PC-3 (cell line): ENCODE measurements at regions of chrX and their contacts with region 1.

Region 1: GRCh38 chrX:77899081-77899828 is at the start of gene COX7B:
- DNase-seq: peak; percentile 99
- ATAC-seq: peak; percentile 62
- H3K4me3 ChIP-seq: peak within 1 kb of the TSS; percentile 99
- H3K27ac ChIP-seq: peak within 1 kb of the TSS; percentile 92
- H3K4me1 ChIP-seq: peaks cover 8% of the 10 kb centered on the region; the same call in 1 of the 2 replicates
- H3K27me3 ChIP-seq: no peaks in the 10 kb centered on the region
- CTCF ChIP-seq: peak; percentile 60
- total RNA-seq, gene COX7B: 566 and 852 TPM in 2 replicates

Region 2: GRCh38 chrX:76427560-76428242 is 1471.6 kb before region 1 on chrX and contains the start of gene MAGEE1:
- CTCF ChIA-PET with region 1: no interaction called
- POLR2A ChIA-PET with region 1: interaction called, 16 read pairs
- intact Hi-C with region 1: no loop called
- DNase-seq: peak; percentile 75
- ATAC-seq: peak; percentile 90
- H3K4me3 ChIP-seq: peak within 1 kb of the TSS; percentile 86
- H3K27ac ChIP-seq: no peak within 1 kb of the TSS
- H3K4me1 ChIP-seq: no peaks in the 10 kb centered on the region
- H3K27me3 ChIP-seq: no peaks in the 10 kb centered on the region
- CTCF ChIP-seq: no peak
- total RNA-seq, gene MAGEE1: 1.7 and 2.8 TPM in 2 replicates

Region 3: DNA sequence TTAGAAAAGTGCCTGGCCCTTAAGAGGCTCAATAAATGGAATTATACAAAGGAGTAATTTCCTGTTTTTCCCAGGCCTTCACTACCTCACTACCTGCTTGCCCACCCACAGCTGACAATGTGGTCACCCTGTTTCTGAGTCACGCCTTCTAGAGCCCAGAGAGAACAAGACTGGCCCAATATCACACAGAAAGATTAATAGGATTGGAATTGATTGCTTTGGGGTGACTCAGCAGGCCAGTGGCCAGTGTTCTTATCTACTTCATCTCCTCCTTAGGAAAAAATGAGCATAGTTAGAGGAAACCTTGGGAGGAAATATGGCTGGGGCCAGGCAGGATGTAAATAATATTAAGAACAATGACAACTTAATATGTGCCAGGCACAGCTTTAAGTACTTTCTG is 456.5 kb before region 1 on chrX:
- CTCF ChIA-PET with region 1: no interaction called
- POLR2A ChIA-PET with region 1: no interaction called
- intact Hi-C with region 1: loop called (anchors 5 kb)
- DNase-seq: peak; percentile 92
- ATAC-seq: peak; percentile 95
- H3K4me3 ChIP-seq: no peak overlapping the region
- H3K27ac ChIP-seq: peak overlapping the region; percentile 91
- H3K4me1 ChIP-seq: peaks cover 32% of the 10 kb centered on the region
- H3K27me3 ChIP-seq: no peaks in the 10 kb centered on the region
- CTCF ChIP-seq: no peak

Region 4: GRCh38 chrX:77658886-77659285 is 240.4 kb before region 1 on chrX:
- CTCF ChIA-PET with region 1: no interaction called
- POLR2A ChIA-PET with region 1: interaction called, 4 read pairs
- intact Hi-C with region 1: loop called (anchors 10 kb)
- DNase-seq: no peak
- ATAC-seq: peak; percentile 70
- H3K4me3 ChIP-seq: no peak overlapping the region
- H3K27ac ChIP-seq: peak overlapping the region; percentile 72
- H3K4me1 ChIP-seq: 0 out of 2 replicates have a peak, but pooled peaks cover 7% of the 10 kb centered on the region
- H3K27me3 ChIP-seq: no peaks in the 10 kb centered on the region
- CTCF ChIP-seq: no peak

Region 5: GRCh38 chrX:77785486-77786364 is 113.5 kb before region 1 on chrX and contains the start of gene ATRX:
- CTCF ChIA-PET with region 1: no interaction called
- POLR2A ChIA-PET with region 1: interaction called, 4 read pairs
- intact Hi-C with region 1: loop called (anchors 5 kb)
- DNase-seq: peak; percentile 81
- ATAC-seq: peak; percentile 85
- H3K4me3 ChIP-seq: peak within 1 kb of the TSS; percentile 100
- H3K27ac ChIP-seq: peak within 1 kb of the TSS; percentile 88
- H3K4me1 ChIP-seq: peaks cover 22% of the 10 kb centered on the region
- H3K27me3 ChIP-seq: no peaks in the 10 kb centered on the region
- CTCF ChIP-seq: no peak
- total RNA-seq, gene ATRX: 64.0 and 73.0 TPM in 2 replicates

Region 6: DNA sequence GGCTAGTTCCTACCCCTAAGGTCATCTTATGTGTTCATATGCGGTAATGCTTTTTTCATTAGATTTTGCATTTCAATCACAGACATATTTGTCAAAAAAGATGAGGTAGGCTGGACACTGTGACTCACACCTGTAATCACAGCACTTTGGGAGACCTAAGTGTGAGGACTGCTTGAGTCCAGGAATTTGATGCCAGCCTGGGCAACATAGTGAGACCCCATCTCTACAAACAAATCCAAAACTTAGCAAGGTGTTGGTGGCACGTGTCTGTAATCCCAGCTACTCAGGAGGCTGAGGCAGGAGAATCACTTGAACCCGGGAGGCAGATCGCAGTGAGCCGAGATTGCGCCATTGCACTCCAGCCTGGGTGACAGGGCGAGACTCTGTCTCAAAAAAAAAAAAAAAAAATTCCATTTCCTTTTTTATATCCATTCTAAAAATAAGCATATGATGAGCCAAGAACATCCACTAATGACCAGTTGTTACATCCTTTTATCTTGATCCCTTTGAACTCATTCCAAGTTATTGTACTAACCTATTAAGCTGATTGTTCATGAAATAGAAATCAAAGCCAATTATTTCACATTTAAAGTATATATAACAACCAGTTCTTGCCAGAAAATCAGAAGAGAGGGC is 46.8 kb after region 1 on chrX:
- CTCF ChIA-PET with region 1: no interaction called
- POLR2A ChIA-PET with region 1: no interaction called
- intact Hi-C with region 1: no loop called
- DNase-seq: no peak
- ATAC-seq: no peak
- H3K4me3 ChIP-seq: no peak overlapping the region
- H3K27ac ChIP-seq: no peak overlapping the region
- H3K4me1 ChIP-seq: no peaks in the 10 kb centered on the region
- H3K27me3 ChIP-seq: no peaks in the 10 kb centered on the region
- CTCF ChIP-seq: no peak

Region 7: DNA sequence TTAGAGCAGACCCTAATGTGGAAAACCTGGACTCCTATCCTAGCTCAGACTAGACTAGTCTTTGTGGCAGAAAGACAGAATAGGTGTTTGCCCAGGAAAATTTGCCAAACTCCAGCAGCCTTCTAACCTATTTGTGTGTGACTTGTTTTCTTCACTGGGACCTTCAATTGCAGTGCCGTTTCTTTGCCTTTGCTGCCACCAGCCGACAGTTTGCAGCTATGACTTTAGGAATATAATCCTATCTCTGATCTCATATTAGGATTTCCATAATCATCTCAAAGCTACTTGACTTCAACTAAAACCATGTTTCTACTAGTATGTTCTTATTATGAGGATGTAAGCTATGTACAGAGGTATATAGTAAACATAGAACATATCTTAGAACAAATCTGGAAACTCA is 130.4 kb after region 1 on chrX:
- CTCF ChIA-PET with region 1: interaction called, 7 read pairs
- POLR2A ChIA-PET with region 1: interaction called, 5 read pairs
- intact Hi-C with region 1: loop called (anchors 5 kb)
- DNase-seq: peak; percentile 66
- ATAC-seq: peak; percentile 77
- H3K4me3 ChIP-seq: no peak overlapping the region
- H3K27ac ChIP-seq: no peak overlapping the region
- H3K4me1 ChIP-seq: no peaks in the 10 kb centered on the region; the same call in 1 of the 2 replicates
- H3K27me3 ChIP-seq: no peaks in the 10 kb centered on the region
- CTCF ChIP-seq: peak; percentile 88

Region 8: GRCh38 chrX:78098108-78098507 is 198.9 kb after region 1 on chrX:
- CTCF ChIA-PET with region 1: interaction called, 3 read pairs
- POLR2A ChIA-PET with region 1: no interaction called
- intact Hi-C with region 1: loop called (anchors 5 kb)
- DNase-seq: no peak
- ATAC-seq: no peak
- H3K4me3 ChIP-seq: no peak overlapping the region
- H3K27ac ChIP-seq: no peak overlapping the region
- H3K4me1 ChIP-seq: peaks cover 9% of the 10 kb centered on the region
- H3K27me3 ChIP-seq: no peaks in the 10 kb centered on the region
- CTCF ChIP-seq: no peak